Psoas muscle (tissue), 8 donors: ENCODE measurements at regions of chr6 and their contacts with region 1.

Region 1: GRCh38 chr6:17907406-17908229 is 79.8 kb downstream of the KIF13A start:
- DNase-seq: peak; percentile 80 to 90
- ATAC-seq: peak; percentile 94 to 98 (median 95)
- H3K4me3 ChIP-seq: peak overlapping the region; percentile 33
- H3K27ac ChIP-seq: peak overlapping the region; percentile 91
- H3K4me1 ChIP-seq: peaks cover 75% of the 10 kb centered on the region
- H3K27me3 ChIP-seq: no peaks in the 10 kb centered on the region
- CTCF ChIP-seq: peak; percentile 28

Region 2: GRCh38 chr6:16267428-16268263 is 1640.0 kb before region 1 on chr6:
- intact Hi-C with region 1: no loop called
- DNase-seq: no peak
- ATAC-seq: peak in 3 of 4 donors; percentile 63 to 78 (median 71)
- H3K4me3 ChIP-seq: no peak overlapping the region
- H3K27ac ChIP-seq: peak overlapping the region; percentile 52
- H3K4me1 ChIP-seq: peaks cover 7% of the 10 kb centered on the region
- H3K27me3 ChIP-seq: no peaks in the 10 kb centered on the region
- CTCF ChIP-seq: no peak

Region 3: GRCh38 chr6:17865798-17866725 is 41.6 kb before region 1 on chr6:
- intact Hi-C with region 1: loop called (anchors 5 kb)
- DNase-seq: peak; percentile 80 to 88
- ATAC-seq: peak; percentile 94 to 99 (median 97)
- H3K4me3 ChIP-seq: no peak overlapping the region
- H3K27ac ChIP-seq: peak overlapping the region; percentile 86
- H3K4me1 ChIP-seq: peaks cover 58% of the 10 kb centered on the region
- H3K27me3 ChIP-seq: no peaks in the 10 kb centered on the region
- CTCF ChIP-seq: no peak

Region 4: DNA sequence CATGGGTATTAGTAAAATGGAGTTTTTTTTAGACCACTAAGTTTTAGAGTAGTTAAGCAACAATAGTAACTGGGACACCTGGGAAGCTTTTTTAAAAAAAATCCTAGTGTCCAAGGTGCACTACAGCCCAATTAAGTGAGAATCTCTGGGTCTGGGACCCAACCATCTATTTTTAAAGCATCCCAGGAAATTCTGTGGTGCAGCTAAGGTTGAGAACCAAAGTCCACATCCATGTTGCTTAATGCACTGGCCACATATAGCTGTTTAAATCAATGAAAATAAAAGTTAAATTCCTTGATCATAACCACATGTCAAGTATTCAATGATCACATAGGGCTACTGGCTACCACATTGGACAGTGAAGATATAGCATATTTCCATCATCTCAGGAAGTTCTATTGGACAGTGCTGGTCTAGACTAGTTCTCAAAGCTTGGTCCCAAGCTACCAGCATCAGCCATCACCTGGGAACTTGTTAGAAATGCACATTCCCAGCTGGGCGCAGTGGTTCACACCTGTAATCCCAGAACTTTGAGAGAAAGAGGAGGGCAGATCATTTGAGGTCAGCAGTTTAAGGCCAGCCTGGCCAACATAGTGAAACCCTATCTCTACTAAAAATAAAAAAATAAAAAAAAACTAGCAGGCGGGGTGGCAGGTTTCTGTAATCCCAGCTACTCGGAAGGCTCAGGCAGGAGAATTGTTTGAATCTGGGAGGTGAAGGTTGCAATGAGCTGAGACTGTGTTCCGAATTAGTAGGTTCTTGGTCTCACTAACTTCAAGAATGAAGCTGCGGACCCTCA is 67.2 kb after region 1 on chr6:
- intact Hi-C with region 1: no loop called
- DNase-seq: no peak
- ATAC-seq: peak in 2 of 4 donors; percentile 41 to 72
- H3K4me3 ChIP-seq: peak overlapping the region; percentile 15
- H3K27ac ChIP-seq: peak overlapping the region; percentile 42
- H3K4me1 ChIP-seq: peaks cover 68% of the 10 kb centered on the region
- H3K27me3 ChIP-seq: no peaks in the 10 kb centered on the region
- CTCF ChIP-seq: no peak

Region 5: GRCh38 chr6:18293076-18293904 is 385.7 kb after region 1 on chr6:
- intact Hi-C with region 1: no loop called
- DNase-seq: no peak
- ATAC-seq: peak in 3 of 4 donors; percentile 43 to 57 (median 48)
- H3K4me3 ChIP-seq: no peak overlapping the region
- H3K27ac ChIP-seq: peak overlapping the region; percentile 9
- H3K4me1 ChIP-seq: peaks cover 12% of the 10 kb centered on the region
- H3K27me3 ChIP-seq: no peaks in the 10 kb centered on the region
- CTCF ChIP-seq: no peak